Right lobe of liver (tissue), 6 donors: ENCODE measurements at regions of chr1 and their contacts with region 1.

Region 1: GRCh38 chr1:209769171-209769904 is 13.5 kb downstream of the TRAF3IP3 start:
- DNase-seq: peak in 2 of 3 donors; percentile 43 to 59
- ATAC-seq: peak; percentile 66 to 81 (median 76)
- H3K4me3 ChIP-seq: no peak overlapping the region
- H3K27ac ChIP-seq: peak overlapping the region in 2 of 3 donors; percentile 30 to 72
- H3K4me1 ChIP-seq: peaks cover 0 to 4% (median 0%) of the 10 kb centered on the region in 4 donors
- H3K27me3 ChIP-seq: no peaks in the 10 kb centered on the region
- CTCF ChIP-seq: no peak
- POLR2A ChIP-seq: no peak

Region 2: DNA sequence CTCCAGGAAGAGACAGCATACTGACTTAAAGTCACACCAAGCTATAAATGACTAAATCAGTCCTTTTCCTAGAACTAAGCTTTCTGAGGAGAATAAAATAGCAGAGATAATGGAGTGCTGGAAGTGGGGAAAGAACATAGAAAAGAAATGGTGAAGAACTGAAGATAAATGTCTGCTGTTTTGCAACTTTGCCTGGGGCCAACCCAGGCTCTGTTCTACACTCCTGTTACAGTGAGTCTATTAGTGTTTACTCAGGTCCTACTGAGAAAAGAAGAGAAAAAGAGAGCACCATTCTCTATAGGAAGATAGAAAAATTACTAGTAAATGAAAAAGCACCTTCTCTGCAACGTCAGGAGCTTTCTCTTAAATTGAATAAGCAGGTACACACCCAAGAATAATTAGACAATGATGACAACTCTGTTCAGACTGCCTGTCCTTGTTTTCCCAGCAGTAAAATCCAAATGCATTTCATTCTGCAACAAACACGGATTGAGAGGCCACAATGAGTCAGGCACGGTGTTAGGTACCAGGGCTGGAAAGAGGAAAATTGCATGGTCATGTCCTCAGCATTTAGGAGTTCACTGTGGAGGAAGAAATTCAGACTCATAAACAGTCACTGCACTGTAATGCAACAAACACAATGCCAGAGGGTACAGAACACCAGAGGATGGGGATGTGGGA is 325.2 kb before region 1 on chr1:
- intact Hi-C with region 1: no loop called
- DNase-seq: no peak
- ATAC-seq: no peak
- H3K4me3 ChIP-seq: no peak overlapping the region
- H3K27ac ChIP-seq: no peak overlapping the region
- H3K4me1 ChIP-seq: no peaks in the 10 kb centered on the region
- H3K27me3 ChIP-seq: no peaks in the 10 kb centered on the region
- CTCF ChIP-seq: no peak
- POLR2A ChIP-seq: no peak

Region 3: DNA sequence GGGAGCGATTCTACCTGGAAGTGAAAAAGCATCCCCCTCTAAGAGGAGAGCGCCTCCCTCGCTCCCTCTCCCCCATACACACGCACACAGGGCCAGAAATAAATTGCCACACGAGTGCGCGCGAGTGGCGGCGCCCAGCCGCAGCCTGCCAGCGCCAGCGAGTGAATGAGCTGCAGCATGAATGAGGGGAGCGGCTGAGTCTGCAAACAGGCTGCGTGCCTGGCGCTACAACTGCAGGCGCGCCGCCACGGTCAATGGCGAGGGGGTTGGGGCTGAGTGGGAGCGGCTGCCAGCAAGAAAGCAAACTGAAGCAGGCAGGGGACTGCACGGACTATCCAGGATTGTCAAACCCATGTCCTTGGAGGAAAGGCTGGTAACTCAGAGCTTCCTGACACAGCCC is 183.7 kb before region 1 on chr1:
- intact Hi-C with region 1: loop called in 1 of 2 experiments (anchors 10 kb)
- DNase-seq: peak in 1 of 3 donors; percentile 46
- ATAC-seq: peak; percentile 65 to 76 (median 70)
- H3K4me3 ChIP-seq: no peak overlapping the region
- H3K27ac ChIP-seq: no peak overlapping the region
- H3K4me1 ChIP-seq: peaks cover 0 to 6% (median 3%) of the 10 kb centered on the region in 4 donors
- H3K27me3 ChIP-seq: peaks cover 0 to 8% of the 10 kb centered on the region in 2 donors
- CTCF ChIP-seq: no peak
- POLR2A ChIP-seq: no peak